ENCODE measurements at regions of chr19 and their contacts with region 1.

Region 1: DNA sequence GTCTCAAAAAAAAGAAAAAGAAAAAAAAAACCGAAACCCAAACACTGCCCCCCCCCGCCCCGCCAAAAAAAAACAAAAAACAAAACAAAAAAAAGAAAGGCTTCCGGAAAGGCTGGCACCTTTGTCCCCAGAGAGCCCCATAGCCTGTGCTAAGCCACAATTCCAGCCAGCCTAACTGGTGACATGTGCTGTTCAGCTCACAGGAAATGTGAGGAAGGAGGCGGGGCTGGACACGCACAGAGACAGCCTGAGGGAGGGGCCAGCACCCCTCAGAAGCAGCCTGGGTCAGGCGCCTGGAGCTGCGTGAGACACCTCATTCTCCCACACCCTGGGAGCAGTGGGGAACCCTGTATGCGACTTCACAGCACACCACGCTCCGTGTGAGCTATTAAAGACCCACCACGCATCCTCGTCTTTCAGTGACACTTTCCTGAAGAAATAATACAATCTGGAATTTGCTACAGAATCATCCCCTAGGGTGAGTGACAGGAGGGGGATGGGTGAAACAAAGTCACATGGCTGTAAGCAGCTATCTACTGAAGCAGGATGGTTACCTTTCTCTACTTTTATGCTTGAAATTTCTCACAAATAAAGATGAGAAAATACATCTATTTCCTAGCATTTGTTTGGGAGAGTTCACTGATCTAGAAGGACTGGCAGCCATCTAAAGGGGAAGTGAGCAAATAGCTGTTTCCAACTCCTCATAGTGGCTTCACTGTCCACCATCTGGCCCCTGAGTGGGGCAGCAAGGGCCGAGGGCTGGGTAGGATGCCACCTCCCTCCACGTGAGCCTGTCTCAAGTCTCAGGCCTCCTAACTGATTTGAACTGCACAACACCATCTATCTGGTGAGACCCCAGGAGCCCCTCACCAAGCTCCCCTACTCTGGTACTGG is 12.3 kb upstream of the SLC35E1 start:
- DNase-seq: peak; percentile 89
- CTCF ChIP-seq: no peak

Region 2: GRCh38 chr19:16495982-16496612 is 88.4 kb before region 1 on chr19 and contains the starts of genes C19orf44 and CALR3:
- CTCF ChIA-PET with region 1: no interaction called
- POLR2A ChIA-PET with region 1: no interaction called
- DNase-seq: peak; percentile 98
- CTCF ChIP-seq: no peak

Region 3: GRCh38 chr19:16518483-16519229 is 65.8 kb before region 1 on chr19:
- CTCF ChIA-PET with region 1: no interaction called
- POLR2A ChIA-PET with region 1: no interaction called
- DNase-seq: no peak
- CTCF ChIP-seq: no peak

Region 4: DNA sequence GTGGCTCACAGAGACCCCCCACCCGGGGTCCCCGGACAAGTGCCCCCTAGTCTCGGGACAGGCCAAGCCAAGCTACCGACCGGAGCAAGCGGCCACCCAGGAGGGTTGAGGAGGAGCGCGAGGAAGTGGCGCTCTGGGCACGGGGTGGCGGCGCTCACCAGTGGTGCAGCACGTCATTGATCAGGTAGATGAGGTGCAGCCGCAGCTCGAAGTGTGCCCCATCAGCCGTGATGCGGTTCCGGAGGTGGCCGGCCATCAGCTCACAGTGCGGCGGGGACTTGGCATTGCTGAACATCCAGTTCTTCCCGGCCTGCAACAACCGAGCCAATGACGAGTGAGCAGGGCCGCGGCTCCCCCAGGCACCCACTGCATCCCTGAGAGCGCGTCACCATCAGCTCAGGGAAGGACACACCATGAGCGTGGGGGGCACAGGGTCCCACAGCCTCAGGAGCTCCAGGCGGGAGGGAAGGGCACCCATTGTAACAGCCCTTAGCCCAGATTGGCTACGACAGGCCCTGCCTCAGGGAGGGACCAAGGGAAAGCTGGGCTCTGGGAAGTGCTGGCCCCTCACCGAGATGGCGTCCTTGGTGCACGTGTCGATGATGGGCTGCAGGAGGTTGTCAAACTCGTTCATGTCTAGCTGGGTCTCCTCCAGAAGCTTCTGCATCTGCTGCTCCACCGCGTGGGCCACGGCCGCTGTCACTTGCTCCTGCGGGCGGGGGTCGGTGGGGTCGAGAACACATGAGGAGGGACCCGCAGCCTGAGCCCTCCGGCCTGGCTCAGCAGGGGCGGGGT is 51.9 kb before region 1 on chr19:
- CTCF ChIA-PET with region 1: no interaction called
- POLR2A ChIA-PET with region 1: no interaction called
- DNase-seq: no peak
- CTCF ChIP-seq: no peak

Region 5: DNA sequence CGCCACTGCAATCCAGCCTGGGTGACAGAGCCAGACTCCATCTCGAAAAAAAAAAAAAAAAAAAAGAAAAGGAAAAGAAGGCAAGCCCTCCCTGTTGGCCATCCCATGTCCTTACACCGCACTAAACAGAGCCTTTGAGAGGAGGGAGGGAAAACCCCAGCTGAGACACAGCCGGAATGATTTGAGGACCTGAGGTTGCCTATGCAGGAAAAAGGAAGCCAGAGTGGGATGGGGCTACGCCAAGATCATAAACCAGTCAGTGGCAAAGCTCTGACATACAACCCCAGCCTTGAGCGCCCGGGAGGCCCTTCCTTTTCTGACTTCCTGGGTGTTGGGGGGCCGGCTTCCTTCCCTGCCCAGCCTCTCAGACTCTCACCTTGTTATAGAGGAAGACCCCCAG is 29.7 kb before region 1 on chr19:
- CTCF ChIA-PET with region 1: interaction called, 4 read pairs
- POLR2A ChIA-PET with region 1: interaction called, 10 read pairs
- DNase-seq: no peak
- CTCF ChIP-seq: no peak

Region 6: DNA sequence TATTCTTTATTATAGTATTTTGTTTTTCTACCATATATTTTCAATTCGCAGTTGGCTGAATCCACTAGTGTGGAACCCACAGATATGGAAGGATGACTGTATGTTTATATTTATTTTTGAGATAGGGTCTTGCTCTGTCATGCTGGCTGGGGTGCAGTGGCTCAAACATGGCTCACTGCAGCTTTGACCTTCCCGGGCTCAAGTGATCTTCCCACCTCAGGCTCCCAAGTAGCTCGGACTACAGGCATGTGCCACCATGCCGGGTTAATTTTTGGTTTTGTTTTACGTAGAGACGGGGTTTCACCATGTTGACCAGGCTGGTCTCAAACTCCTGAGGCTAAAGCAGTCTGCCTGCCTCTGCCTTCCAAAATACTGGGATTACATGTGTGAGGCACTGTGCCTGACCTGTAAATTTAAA is 21.9 kb before region 1 on chr19:
- CTCF ChIA-PET with region 1: interaction called, 4 read pairs
- POLR2A ChIA-PET with region 1: interaction called, 15 read pairs
- DNase-seq: no peak
- CTCF ChIP-seq: no peak

Region 7: GRCh38 chr19:16572332-16573211 is 11.9 kb before region 1 on chr19 and contains the start of gene SLC35E1:
- CTCF ChIA-PET with region 1: interaction called, 11 read pairs
- POLR2A ChIA-PET with region 1: interaction called, 36 read pairs
- DNase-seq: peak; percentile 99
- CTCF ChIP-seq: no peak

Region 8: GRCh38 chr19:16619457-16619856 is 35.0 kb after region 1 on chr19:
- CTCF ChIA-PET with region 1: interaction called, 9 read pairs
- POLR2A ChIA-PET with region 1: interaction called, 14 read pairs
- DNase-seq: no peak
- CTCF ChIP-seq: no peak

Region 9: DNA sequence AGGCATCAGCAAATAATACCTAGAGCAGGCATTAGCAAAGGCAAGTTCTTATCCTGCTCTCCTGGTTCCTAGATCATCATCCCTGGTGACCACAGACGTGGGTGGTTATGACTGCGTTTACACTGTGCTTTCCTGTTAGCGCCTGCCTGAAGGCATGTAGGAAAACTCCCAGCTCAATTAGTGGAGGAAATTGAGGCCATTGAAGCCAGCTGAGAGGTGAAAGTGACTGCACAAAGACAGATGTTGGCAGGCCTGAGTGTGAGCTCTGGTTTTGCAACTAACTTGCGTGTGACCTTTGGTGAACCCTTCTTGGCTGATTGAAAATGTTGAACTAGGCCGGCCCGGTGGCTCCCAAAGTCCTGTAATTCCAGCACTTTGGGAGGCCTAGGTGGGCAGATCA is 117.6 kb after region 1 on chr19:
- CTCF ChIA-PET with region 1: no interaction called
- POLR2A ChIA-PET with region 1: no interaction called
- DNase-seq: no peak
- CTCF ChIP-seq: no peak

Measured in GM10248 (cell line).